ENCODE measurements at regions of chr2 and their contacts with region 1.

Region 1: DNA sequence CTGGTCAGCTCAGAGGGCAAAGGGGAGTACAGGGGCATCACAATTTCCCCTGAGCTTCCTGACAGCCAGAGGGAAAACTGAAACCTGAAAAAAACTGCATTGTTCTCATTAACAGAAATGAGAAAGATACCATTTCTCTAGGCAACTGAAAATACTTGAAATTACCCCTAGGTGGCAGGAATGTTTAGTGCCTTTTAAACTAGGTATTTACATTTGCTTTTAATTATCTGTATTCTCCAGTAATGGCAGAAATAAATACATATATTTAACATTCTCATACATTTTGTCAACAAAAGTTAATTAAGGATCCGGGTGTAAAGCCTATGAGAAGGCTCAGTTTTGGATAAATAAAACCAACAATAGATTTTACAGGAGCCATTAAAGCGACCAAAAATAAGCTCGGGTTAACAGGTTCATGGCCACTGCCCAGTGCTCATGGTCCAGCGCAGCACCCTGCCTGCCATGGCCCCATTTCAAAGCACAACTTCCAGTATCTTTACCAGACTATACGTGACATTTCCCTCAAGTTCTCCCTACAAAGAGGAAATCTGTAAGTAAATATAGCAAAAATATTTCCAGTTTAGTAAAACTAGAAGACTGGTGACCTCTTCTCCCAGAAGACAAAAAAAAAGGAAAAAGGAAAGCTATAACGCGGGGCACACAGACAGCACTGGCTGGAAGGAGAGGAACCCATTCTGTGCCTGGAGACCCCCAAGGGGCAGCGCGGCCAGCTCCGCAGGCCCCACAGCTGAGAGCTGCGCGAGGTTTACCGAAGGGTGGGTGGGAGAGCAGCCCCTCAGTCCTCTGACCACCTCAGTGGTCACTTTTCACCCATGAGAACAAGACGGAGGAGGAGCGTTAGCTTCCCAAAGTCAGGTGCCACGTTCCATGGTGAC is 34.7 kb downstream of the RPL31 start:
- DNase-seq: peak; percentile 10
- H3K4me3 ChIP-seq: no peak overlapping the region
- H3K27me3 ChIP-seq: no peaks in the 10 kb centered on the region
- CTCF ChIP-seq: peak; percentile 57

Region 2: GRCh38 chr2:101018934-101019333 is 17.9 kb before region 1 on chr2:
- CTCF ChIA-PET with region 1: no interaction called
- POLR2A ChIA-PET with region 1: no interaction called
- DNase-seq: no peak
- H3K4me3 ChIP-seq: no peak overlapping the region
- H3K27me3 ChIP-seq: no peaks in the 10 kb centered on the region
- CTCF ChIP-seq: no peak

Region 3: DNA sequence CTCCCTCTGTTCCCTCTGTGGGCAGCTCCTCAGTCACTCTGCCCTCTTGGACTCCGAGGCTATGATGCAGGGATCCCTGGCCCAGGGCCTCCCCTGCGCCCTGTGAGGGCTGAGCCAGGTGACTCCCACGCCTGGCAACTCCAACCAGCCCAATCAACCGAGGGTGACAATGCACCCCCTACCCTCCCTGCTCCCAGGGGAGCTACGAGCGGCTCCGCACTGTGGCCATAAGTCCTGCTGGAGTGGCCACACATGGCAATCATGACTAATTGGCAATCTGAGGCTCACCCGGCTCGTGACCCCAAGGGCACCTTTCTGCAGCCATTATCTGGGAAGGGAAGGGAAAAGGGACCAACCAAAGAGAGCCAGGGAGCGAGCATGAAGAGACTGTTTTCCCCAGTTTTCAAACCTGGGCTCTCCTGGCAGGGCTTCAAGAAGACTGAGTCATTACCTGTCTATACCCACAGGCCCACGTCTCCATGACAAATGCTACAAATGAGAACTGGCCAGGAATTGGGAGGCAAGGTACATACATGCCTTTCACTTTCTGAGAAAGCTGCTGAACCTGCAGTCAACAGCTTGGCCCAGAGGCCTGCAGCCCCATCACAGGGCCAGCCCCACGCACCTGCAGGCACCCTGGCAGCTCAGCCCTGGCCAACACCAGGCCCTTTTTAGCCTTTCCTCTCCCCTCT is 10.4 kb after region 1 on chr2:
- CTCF ChIA-PET with region 1: interaction called, 29 read pairs
- POLR2A ChIA-PET with region 1: no interaction called
- DNase-seq: no peak
- H3K4me3 ChIP-seq: no peak overlapping the region
- H3K27me3 ChIP-seq: no peaks in the 10 kb centered on the region
- CTCF ChIP-seq: no peak

Region 4: DNA sequence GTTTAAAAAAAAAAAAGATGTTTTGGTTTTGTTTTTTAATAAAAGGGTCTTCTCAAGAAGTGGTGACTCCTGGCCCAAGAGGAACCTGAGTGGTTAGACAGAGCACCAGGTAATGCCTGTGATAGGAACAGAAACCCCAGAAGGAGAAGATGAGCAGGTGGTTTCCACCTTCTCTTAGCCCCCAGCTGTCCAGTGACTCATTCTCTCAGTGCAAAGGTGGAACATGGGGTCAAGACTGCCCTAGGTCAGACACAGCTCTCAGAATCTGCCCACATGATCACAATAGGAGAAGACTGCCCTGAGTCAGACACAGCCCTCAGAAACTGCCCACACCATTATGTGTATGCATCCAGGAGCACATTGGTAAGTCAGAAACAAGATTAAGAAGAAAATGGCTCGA is 52.6 kb after region 1 on chr2:
- CTCF ChIA-PET with region 1: no interaction called
- POLR2A ChIA-PET with region 1: no interaction called
- DNase-seq: no peak
- H3K4me3 ChIP-seq: no peak overlapping the region
- H3K27me3 ChIP-seq: no peaks in the 10 kb centered on the region
- CTCF ChIP-seq: no peak

Region 5: DNA sequence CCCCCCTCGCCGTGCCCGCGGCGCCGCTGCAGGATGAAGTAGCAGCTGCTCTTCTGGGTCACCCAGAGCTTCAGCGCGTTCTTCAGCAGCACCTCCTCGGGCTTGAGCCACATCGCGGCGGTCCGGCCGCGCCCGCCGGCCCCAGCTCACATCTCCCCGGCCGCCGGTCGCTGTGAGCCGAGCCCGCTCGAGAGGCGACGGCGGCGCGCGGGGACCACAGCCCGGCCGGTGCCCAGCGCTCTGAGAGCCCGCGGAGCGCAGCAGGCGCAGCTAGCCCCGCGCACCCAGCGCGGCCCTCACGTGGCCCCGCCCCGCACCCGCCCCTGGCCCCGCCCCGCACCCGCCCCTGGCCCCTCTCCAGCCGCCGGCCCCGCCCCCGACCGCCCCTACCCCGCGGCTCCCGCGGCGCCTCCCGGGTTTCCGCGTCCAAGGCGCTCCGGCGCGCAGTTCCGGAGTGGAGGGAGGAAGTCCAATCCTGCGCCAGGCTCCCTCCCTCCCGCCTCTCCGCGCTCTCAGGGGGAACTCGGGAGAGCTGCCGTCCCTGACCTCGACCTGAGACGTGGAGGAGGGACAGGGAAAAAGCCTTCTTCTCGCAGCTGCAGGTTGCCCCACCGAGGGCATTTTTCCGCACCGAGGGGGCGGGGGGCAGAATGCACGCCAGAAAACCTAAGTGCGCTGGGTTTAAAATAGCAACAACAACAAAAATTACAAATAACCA is 114.5 kb after region 1 on chr2 and contains the start of gene TBC1D8:
- CTCF ChIA-PET with region 1: interaction called, 57 read pairs
- POLR2A ChIA-PET with region 1: no interaction called
- DNase-seq: no peak
- H3K4me3 ChIP-seq: peak within 1 kb of the TSS; percentile 58
- H3K27me3 ChIP-seq: no peaks in the 10 kb centered on the region; the same call in 1 of the 2 replicates
- CTCF ChIP-seq: no peak
- polyA plus RNA-seq, gene TBC1D8: 5.9 and 8.8 TPM in 2 replicates

Region 6: DNA sequence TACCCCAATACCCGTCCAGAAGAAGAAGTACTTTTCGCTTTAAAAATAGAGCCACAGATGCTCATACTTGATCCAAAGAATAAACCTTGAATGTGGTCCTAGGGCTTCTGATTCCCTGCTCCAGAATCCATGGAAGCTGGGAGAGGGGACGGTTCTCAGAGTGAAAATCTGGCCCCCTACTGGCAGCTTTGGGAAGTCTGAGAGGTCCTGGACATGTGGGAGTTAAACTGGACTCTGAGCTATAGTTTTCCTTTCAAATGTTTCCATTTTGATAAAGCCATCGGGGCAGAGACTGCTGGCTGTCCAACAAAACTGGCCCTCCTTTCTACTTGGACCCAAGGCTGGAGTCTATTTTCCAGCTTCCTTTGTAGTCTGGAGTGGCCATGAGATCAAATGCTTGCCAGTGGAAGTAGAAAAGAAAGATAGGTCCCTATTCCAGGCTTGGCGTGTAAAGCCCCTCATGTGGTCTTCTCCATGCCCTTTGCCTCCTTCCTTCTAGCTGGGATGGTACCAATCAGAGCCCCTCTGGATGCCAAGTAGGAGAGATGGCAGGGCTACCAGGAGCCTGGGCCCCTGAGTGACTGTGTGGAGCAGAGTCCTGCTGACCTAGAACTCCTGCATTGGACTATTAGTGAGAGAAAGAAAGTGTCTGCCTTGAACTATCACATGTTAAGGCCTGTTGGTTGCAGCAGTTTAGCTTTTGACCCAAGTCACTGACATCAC is 152.0 kb after region 1 on chr2:
- CTCF ChIA-PET with region 1: interaction called, 39 read pairs
- POLR2A ChIA-PET with region 1: no interaction called
- DNase-seq: no peak
- H3K4me3 ChIP-seq: no peak overlapping the region
- H3K27me3 ChIP-seq: peaks cover 3% of the 10 kb centered on the region
- CTCF ChIP-seq: peak; percentile 78